Testis (tissue), 5 donors: ENCODE measurements at regions of chr18 and their contacts with region 1.

Region 1: GRCh38 chr18:63320046-63320689 is 599 bp upstream of the BCL2 start:
- DNase-seq: peak; percentile 90
- H3K4me3 ChIP-seq: peak overlapping the region; percentile 71 to 86
- H3K27ac ChIP-seq: peak overlapping the region; percentile 76 to 93
- H3K4me1 ChIP-seq: peaks cover 18% of the 10 kb centered on the region
- H3K27me3 ChIP-seq: no peaks in the 10 kb centered on the region
- CTCF ChIP-seq: peak in 1 of 3 experiments; percentile 41
- POLR2A ChIP-seq: no peak

Region 2: DNA sequence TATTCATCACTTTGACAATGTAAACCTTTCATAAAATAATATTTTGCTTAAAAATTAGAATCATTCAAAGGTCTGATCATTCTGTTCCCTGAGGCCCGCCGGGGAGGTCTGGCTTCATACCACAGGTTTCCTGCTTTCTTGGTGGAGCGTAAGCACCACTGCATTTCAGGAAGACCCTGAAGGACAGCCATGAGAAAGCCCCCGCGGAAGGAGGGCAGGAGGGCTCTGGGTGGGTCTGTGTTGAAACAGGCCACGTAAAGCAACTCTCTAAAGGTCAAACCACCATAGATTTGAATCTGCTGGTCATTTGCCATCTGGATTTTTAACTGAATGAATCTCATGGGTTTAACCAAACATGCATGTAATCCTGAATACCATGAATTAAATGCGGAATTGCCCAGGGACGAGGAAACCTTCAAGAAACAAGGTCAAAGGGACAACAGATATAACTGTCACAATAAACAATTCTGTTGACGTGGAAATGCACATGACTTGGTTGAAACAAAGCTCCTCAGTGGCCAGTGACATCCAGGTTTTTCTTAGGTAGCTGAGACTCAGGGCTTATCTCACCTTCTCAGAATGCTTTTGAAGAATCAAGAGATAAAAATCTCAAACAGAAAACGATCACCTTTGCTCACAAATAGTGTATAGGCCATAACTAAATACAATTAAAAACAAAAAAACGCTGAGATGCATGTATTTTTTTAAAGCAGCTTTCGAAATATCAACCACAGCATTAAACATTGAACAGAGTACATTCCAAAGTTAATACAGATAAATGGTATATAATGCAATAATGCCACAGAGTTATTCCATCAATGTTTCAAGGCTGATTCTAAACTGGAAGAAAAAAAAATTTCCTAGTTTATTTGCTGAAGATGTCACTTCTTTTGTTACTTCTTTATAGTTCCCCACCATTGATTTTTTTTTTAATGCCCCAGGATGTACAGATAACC is 193.8 kb before region 1 on chr18:
- intact Hi-C with region 1: loop called (anchors 5 kb)
- DNase-seq: no peak
- H3K4me3 ChIP-seq: no peak overlapping the region
- H3K27ac ChIP-seq: no peak overlapping the region
- H3K4me1 ChIP-seq: peaks cover 3% of the 10 kb centered on the region
- H3K27me3 ChIP-seq: no peaks in the 10 kb centered on the region
- CTCF ChIP-seq: no peak
- POLR2A ChIP-seq: no peak

Region 3: DNA sequence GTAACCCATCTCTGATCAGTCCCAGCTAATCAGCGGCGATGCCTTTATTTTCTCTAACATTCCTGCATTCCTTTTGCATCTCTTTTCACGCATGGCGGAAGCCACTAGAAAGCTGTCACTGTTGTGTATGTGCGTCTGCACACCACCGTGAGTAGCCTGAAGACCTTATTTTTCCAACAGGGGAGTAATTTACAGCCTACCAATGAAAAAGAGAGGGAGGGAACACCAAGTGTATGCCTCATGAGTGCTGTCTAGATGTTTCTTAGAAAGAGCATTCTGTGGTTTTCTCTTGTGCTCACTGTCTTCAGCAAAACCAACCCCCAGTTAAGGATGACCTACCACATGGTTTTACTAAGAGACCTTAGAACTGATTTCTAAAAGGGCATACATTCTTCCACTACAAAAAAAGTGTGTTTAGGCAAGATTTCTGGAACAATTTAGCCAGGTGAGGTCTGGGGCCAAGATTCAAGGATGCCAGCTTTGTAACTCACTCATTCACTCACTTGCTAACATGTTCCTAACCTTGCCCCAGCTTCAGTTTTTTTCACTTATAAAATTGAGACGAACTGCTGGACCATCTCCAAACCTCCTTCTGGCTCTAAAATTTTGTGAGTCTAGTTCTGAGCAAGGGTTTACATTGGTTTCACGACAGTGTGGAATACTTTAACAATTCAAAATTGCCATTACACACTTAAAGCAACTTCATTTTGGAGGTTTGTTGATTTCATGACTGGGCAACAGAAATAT is 52.0 kb before region 1 on chr18:
- intact Hi-C with region 1: loop called (anchors 10 kb)
- DNase-seq: no peak
- H3K4me3 ChIP-seq: no peak overlapping the region
- H3K27ac ChIP-seq: no peak overlapping the region
- H3K4me1 ChIP-seq: peaks cover 12% of the 10 kb centered on the region
- H3K27me3 ChIP-seq: no peaks in the 10 kb centered on the region
- CTCF ChIP-seq: no peak
- POLR2A ChIP-seq: no peak